ENCODE measurements at regions of chr15 and their contacts with region 1.

Region 1: DNA sequence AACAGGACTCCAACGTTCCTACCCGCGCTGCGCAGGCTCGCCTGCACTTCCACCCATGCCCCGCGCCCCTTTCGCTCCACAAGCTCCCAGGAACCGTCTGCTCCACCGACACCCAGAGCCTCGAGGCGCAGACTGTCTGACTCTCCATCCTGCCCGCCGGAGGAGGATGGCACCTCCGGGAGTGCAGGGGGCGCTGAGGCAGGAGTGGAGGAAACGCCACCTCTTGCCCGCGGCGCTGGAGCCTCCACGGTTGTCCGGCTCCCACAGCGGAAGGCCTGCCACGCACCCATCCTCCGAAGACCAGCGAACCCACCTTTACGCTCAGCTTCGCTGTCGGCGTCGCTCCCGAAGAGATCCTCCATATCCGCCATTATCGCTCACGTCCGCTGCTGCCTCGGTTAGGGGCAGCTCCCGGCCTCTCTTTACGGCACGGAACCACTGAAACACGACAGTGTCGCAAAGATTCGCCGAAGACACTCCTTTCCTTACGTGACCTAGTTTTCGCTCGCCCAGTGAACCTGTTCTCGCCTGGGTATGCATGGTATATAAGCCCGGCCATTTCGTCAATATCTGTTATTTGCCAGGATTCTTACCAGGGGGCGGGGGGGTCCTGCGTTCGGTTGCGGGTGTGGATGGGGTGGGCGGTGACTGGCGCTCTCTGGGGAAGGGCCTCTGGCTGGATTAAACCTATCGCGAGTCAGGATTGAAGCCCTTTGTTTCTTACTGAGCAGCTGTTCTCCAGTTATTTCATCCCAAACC is at the start of gene LEO1:
- DNase-seq: peak; percentile 96
- ATAC-seq: peak; percentile 92
- H3K4me3 ChIP-seq: peak within 1 kb of the TSS; percentile 53 to 96 (median 90)
- H3K4me3 Mint-ChIP-seq: peak within 1 kb of the TSS; percentile 96
- H3K27ac ChIP-seq: peak within 1 kb of the TSS; percentile 46 to 78
- H3K27ac Mint-ChIP-seq: peak within 1 kb of the TSS; percentile 96
- H3K4me1 ChIP-seq: peaks cover 7 to 14% of the 10 kb centered on the region in 2 donors
- H3K4me1 Mint-ChIP-seq: peaks cover 22% of the 10 kb centered on the region
- H3K27me3 ChIP-seq: no peaks in the 10 kb centered on the region
- H3K27me3 Mint-ChIP-seq: no peaks in the 10 kb centered on the region
- CTCF ChIP-seq: peak; percentile 39
- total RNA-seq, gene LEO1: 17.9 and 19.1 TPM in 2 replicates

Region 2: DNA sequence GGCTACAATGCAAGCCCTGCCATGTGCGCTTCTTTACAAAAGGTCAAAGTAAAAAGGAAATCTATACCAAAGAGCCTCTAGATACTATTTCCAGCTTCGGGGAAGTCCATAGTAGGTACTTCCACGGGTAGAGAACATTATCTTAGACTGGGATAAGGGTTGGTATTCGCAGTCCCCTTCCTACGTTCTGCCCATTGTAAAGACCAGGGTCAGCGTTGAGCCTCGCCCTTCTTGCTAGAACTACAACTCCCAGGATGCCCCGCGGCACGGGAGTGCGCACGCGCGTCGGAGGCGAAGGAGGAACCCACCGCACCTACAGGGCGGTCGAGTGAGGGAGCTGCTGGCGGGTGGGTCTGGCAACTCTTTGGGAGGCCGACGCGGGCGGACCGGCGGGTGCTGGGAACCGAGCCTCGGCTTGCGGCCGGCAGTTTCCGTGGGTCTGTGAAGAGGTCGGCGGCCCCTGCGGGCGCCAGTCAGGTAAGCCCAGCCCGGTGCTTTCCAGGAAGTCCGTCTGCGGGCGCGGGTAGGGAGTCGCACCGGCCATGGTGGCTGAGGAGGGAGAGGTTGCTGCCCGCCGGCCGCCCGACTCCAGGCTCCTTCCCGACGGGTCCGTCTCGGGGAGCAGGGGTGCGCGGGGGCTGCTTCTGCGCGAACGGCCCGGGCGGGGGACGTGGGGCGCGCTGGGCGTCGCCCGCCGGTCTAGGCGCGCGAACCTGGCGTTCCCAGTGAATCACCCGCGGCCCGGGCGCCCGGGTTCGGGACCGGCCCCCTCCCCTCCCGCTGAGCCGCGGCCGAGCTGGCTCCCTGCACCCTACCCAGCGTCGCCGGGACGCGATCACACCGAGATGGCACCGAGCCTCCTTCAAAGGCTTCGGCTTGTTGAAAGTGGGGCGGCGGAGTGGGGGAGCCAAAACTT is 141.9 kb before region 1 on chr15 and contains the start of gene TMOD3:
- CTCF ChIA-PET with region 1: no interaction called
- POLR2A ChIA-PET with region 1: no interaction called
- intact Hi-C with region 1: loop called (anchors 2 kb)
- DNase-seq: peak; percentile 93
- ATAC-seq: peak; percentile 92
- H3K4me3 ChIP-seq: peak within 1 kb of the TSS; percentile 72 to 88 (median 84)
- H3K4me3 Mint-ChIP-seq: peak within 1 kb of the TSS; percentile 98
- H3K27ac ChIP-seq: peak within 1 kb of the TSS; percentile 65 to 84
- H3K27ac Mint-ChIP-seq: peak within 1 kb of the TSS; percentile 91
- H3K4me1 ChIP-seq: peaks cover 18 to 21% of the 10 kb centered on the region in 2 donors
- H3K4me1 Mint-ChIP-seq: peaks cover 40% of the 10 kb centered on the region
- H3K27me3 ChIP-seq: no peaks in the 10 kb centered on the region
- H3K27me3 Mint-ChIP-seq: no peaks in the 10 kb centered on the region
- CTCF ChIP-seq: no peak
- total RNA-seq, gene TMOD3: 48.7 and 52.1 TPM in 2 replicates

Region 3: GRCh38 chr15:52018693-52019387 is 47.3 kb after region 1 on chr15 and contains the start of gene MAPK6:
- CTCF ChIA-PET with region 1: no interaction called
- POLR2A ChIA-PET with region 1: interaction called, 4 read pairs
- intact Hi-C with region 1: loop called (anchors 1 kb)
- DNase-seq: peak; percentile 98
- ATAC-seq: peak; percentile 86
- H3K4me3 ChIP-seq: peak within 1 kb of the TSS; percentile 68 to 83 (median 81)
- H3K4me3 Mint-ChIP-seq: peak within 1 kb of the TSS; percentile 98
- H3K27ac ChIP-seq: peak within 1 kb of the TSS; percentile 83 to 86
- H3K27ac Mint-ChIP-seq: peak within 1 kb of the TSS; percentile 100
- H3K4me1 ChIP-seq: peaks cover 24 to 27% of the 10 kb centered on the region in 2 donors
- H3K4me1 Mint-ChIP-seq: peaks cover 30% of the 10 kb centered on the region
- H3K27me3 ChIP-seq: no peaks in the 10 kb centered on the region
- H3K27me3 Mint-ChIP-seq: no peaks in the 10 kb centered on the region
- CTCF ChIP-seq: no peak
- total RNA-seq, gene MAPK6: 17.9 and 20.2 TPM in 2 replicates